Heart right ventricle (tissue), 16 donors: ENCODE measurements at regions of chr3 and their contacts with region 1.

Region 1: DNA sequence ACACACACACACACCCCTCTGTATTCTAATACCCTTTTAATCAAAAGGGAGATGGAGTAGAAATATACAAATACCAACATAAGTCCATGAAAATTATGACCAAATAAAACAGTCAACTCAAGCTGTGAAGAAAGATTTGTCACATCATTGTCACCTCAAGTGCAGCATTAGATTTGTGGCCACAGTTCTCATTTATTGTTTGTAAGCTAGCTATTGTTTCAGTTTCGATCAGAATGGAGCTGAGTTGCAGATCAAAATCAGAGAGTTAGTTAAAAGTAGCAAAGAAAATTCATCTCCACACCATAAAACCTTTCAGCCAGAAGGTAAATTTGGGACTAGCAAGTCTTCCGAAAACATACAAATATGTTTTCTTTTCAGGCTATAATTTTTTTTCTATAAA is 267.7 kb upstream of the LMCD1 start:
- DNase-seq: no peak
- ATAC-seq: no peak
- H3K4me3 ChIP-seq: no peak overlapping the region
- H3K27ac ChIP-seq: no peak overlapping the region
- H3K4me1 ChIP-seq: peaks cover 0 to 10% (median 5%) of the 10 kb centered on the region in 9 donors
- H3K27me3 ChIP-seq: no peaks in the 10 kb centered on the region
- CTCF ChIP-seq: no peak

Region 2: DNA sequence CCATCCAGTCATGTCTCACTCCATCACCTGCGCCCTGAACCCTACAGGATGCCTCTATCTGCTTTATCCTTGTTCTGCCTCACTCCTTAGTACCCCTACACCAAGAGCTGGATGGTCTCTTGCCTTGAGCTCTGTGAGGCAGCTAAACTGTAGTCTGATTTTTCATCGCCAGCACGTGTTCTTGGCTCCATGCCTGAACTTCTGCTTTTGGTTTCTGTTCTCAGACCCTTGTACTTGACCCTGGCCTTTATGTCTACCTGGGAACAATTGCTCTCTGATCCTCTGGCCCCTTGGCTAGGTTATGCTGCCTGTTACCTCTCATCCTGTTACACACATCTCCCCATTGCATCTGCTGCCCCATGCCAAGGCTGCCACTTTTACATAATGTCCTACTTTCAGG is 50.3 kb before region 1 on chr3:
- intact Hi-C with region 1: no loop called
- DNase-seq: no peak
- ATAC-seq: no peak
- H3K4me3 ChIP-seq: no peak overlapping the region
- H3K27ac ChIP-seq: no peak overlapping the region
- H3K4me1 ChIP-seq: peaks cover 0 to 9% (median 0%) of the 10 kb centered on the region in 9 donors
- H3K27me3 ChIP-seq: no peaks in the 10 kb centered on the region
- CTCF ChIP-seq: no peak

Region 3: DNA sequence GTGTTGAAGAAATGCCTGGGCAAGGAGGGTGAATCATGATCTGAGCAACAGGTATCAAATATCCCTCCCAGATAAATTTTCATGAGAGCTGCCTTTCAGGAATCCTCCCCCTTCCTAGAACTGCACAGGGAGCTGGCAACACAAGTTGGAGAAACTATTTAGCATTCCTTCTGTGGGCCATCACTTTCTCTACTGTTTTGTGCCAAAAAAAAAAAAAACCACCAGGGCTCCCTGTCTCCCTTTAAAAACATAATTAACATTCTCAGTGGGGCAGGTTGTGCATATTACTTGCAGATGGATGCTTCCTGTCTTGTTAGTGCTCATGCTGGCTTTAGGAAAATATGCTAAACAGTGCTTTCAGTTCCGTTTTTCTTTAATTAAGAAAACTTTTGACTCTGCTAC is 32.8 kb after region 1 on chr3:
- intact Hi-C with region 1: loop called in 1 of 10 experiments (anchors 2 kb)
- DNase-seq: no peak
- ATAC-seq: no peak
- H3K4me3 ChIP-seq: no peak overlapping the region
- H3K27ac ChIP-seq: no peak overlapping the region
- H3K4me1 ChIP-seq: no peaks in the 10 kb centered on the region
- H3K27me3 ChIP-seq: no peaks in the 10 kb centered on the region
- CTCF ChIP-seq: no peak